ENCODE measurements at regions of chr17 and their contacts with region 1.

Region 1: GRCh38 chr17:36534840-36535668 is at the starts of genes MYO19 and PIGW:
- DNase-seq: peak; percentile 84 to 96 (median 90)
- ATAC-seq: peak; percentile 95
- H3K4me3 ChIP-seq: peak within 1 kb of the TSS; percentile 88
- H3K27ac ChIP-seq: peak within 1 kb of the TSS; percentile 91 to 98
- H3K4me1 ChIP-seq: peaks cover 0 to 22% of the 10 kb centered on the region in 2 donors
- H3K27me3 ChIP-seq: no peaks in the 10 kb centered on the region
- CTCF ChIP-seq: peak in 1 of 2 donors; percentile 29
- polyA plus RNA-seq, gene MYO19: 45.7 to 56.1 (median 50.2) TPM
- polyA plus RNA-seq, gene PIGW: 5.9 to 11.0 (median 8.9) TPM

Region 2: DNA sequence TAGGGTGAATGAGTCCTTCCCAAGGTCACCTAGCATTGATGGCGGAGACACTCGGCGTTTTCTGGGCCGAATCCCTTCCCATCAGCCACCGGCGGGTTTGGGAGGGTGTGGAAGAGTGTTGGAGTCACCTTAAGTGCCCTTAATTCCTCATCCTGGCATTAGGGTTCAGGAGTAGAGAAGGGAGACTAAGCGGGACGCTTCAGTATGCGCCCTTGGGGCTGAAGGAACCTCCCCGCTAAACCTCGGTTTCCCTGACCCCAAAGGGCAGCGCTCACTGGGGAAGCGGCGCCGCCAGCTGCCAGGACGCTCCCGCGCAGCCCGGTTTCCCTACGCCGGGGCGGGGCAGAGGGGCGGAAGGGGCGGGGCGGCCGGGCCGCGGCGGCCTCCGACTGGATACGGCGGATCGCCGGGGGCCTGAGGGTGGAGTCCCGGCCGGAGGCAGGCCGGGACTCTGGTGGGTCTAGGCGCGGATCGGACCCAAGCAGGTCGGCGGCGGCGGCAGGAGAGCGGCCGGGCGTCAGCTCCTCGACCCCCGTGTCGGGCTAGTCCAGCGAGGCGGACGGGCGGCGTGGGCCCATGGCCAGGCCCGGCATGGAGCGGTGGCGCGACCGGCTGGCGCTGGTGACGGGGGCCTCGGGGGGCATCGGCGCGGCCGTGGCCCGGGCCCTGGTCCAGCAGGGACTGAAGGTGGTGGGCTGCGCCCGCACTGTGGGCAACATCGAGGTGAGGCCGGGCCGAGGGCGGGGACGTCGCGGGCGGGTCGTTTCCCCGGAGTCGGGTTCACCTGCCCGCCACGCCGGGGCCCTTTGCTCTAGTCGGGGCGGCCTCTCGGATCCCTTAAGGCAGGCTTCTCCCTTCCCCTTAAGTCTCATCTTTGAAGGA is 56.6 kb after region 1 on chr17 and contains the start of gene DHRS11:
- intact Hi-C with region 1: loop called in 1 of 2 experiments (anchors 10 kb)
- DNase-seq: peak; percentile 57 to 97 (median 81)
- ATAC-seq: peak; percentile 98
- H3K4me3 ChIP-seq: peak within 1 kb of the TSS; percentile 79 to 95
- H3K27ac ChIP-seq: peak within 1 kb of the TSS; percentile 56 to 61
- H3K4me1 ChIP-seq: peaks cover 0 to 20% of the 10 kb centered on the region in 2 donors
- H3K27me3 ChIP-seq: peaks cover 0 to 12% of the 10 kb centered on the region in 2 donors
- CTCF ChIP-seq: no peak
- polyA plus RNA-seq, gene DHRS11: 10.2 to 13.7 (median 12.9) TPM